Activated T-helper 1 cell treated with anti-CD3 and anti-CD28 coated beads, Interleukin-12 subunit alpha, Interleukin-12 subunit beta, Interleukin-2, Interleukin-4 antibody, amounts not matched to agents 30 ng/mL and 10 ng/mL and 1 ng/mL, durations not matched to agents 14 hours and 24 hours and 36 hours (primary cell): ENCODE measurements at regions of chr20 and their contacts with region 1.

Region 1: GRCh38 chr20:33731693-33732165 is at the start of gene ZNF341:
- DNase-seq: peak; percentile 87
- H3K4me3 Mint-ChIP-seq: peak within 1 kb of the TSS; percentile 89
- H3K27ac Mint-ChIP-seq: peak within 1 kb of the TSS; percentile 97
- H3K4me1 Mint-ChIP-seq: peaks cover 27% of the 10 kb centered on the region
- H3K27me3 Mint-ChIP-seq: no peaks in the 10 kb centered on the region
- total RNA-seq, gene ZNF341: 6.7 and 6.8 TPM in 2 replicates

Region 2: GRCh38 chr20:33401184-33401920 is 330.4 kb before region 1 on chr20 and contains the start of gene CDK5RAP1:
- intact Hi-C with region 1: loop called (anchors 2 kb)
- DNase-seq: peak; percentile 80
- H3K4me3 Mint-ChIP-seq: peak within 1 kb of the TSS; percentile 98
- H3K27ac Mint-ChIP-seq: peak within 1 kb of the TSS; percentile 91
- H3K4me1 Mint-ChIP-seq: peaks cover 30% of the 10 kb centered on the region
- H3K27me3 Mint-ChIP-seq: no peaks in the 10 kb centered on the region
- total RNA-seq, gene CDK5RAP1: 46.0 and 49.1 TPM in 2 replicates

Region 3: DNA sequence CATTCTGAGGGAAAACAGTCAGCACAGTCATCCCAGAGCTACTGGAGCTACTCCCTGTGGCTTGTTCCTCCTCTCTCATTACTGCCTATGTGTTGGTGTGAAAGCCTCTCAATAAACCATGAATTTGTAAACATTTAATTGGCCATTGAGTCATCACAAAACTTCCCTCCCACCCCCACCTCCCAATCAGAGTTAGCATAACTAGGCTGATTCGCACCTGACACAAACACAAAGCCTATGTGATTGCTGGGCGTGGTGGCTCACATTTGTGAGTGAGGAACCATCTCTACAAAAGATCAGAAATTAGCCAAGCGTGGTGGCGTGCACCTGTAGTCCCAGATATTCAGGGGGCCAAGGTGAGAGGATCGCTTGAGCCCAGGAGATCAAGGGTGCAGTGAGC is 271.0 kb before region 1 on chr20:
- intact Hi-C with region 1: loop called (anchors 1 kb)
- DNase-seq: no peak
- H3K4me3 Mint-ChIP-seq: no peak overlapping the region
- H3K27ac Mint-ChIP-seq: no peak overlapping the region
- H3K4me1 Mint-ChIP-seq: no peaks in the 10 kb centered on the region
- H3K27me3 Mint-ChIP-seq: no peaks in the 10 kb centered on the region

Region 4: DNA sequence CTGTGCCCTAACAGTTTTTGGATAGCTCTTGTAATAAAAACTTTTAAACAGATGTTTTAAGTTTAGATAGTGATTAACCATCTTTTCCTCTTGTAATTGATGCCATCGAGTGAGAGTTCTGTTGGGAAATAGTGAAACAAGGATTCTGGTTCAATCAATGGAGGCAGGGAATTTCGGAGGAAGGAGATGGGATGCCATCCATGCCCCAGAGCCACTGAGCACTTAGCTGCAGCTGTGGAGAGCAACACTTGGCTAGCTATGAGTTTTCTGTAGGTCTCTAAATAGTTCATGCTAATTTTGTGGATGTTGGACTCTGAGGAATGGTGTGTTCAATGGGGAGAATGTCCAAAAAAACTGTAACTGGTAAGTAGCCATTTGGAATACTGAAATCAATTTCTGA is 225.2 kb before region 1 on chr20:
- intact Hi-C with region 1: no loop called
- DNase-seq: no peak
- H3K4me3 Mint-ChIP-seq: no peak overlapping the region
- H3K27ac Mint-ChIP-seq: no peak overlapping the region
- H3K4me1 Mint-ChIP-seq: peaks cover 5% of the 10 kb centered on the region
- H3K27me3 Mint-ChIP-seq: no peaks in the 10 kb centered on the region

Region 5: GRCh38 chr20:33686100-33686983 is 45.4 kb before region 1 on chr20 and contains the start of gene E2F1:
- intact Hi-C with region 1: loop called (anchors 1 kb)
- DNase-seq: peak; percentile 97
- H3K4me3 Mint-ChIP-seq: peak within 1 kb of the TSS; percentile 92
- H3K27ac Mint-ChIP-seq: peak within 1 kb of the TSS; percentile 89
- H3K4me1 Mint-ChIP-seq: peaks cover 71% of the 10 kb centered on the region
- H3K27me3 Mint-ChIP-seq: no peaks in the 10 kb centered on the region
- total RNA-seq, gene E2F1: 77.5 and 80.6 TPM in 2 replicates

Region 6: GRCh38 chr20:34111702-34112599 is 380.2 kb after region 1 on chr20 and contains the start of gene EIF2S2:
- intact Hi-C with region 1: loop called (anchors 1 kb)
- DNase-seq: peak; percentile 96
- H3K4me3 Mint-ChIP-seq: peak within 1 kb of the TSS; percentile 88
- H3K27ac Mint-ChIP-seq: peak within 1 kb of the TSS; percentile 98
- H3K4me1 Mint-ChIP-seq: peaks cover 46% of the 10 kb centered on the region
- H3K27me3 Mint-ChIP-seq: peaks cover 1% of the 10 kb centered on the region
- total RNA-seq, gene EIF2S2: 99.8 and 105 TPM in 2 replicates